Activated B cell treated with CpG ODN at 0.5 μM for 24 hours (primary cell): ENCODE measurements at regions of chr17 and their contacts with region 1.

Region 1: GRCh38 chr17:44775136-44775837 is 16.5 kb downstream of the ADAM11 start:
- DNase-seq: peak; percentile 90
- ATAC-seq: peak; percentile 96
- H3K4me3 Mint-ChIP-seq: peak overlapping the region; percentile 87
- H3K27ac Mint-ChIP-seq: no peak overlapping the region
- H3K4me1 Mint-ChIP-seq: peaks cover 18% of the 10 kb centered on the region
- H3K27me3 Mint-ChIP-seq: no peaks in the 10 kb centered on the region
- CTCF ChIP-seq: no peak

Region 2: GRCh38 chr17:44807817-44808155 is 32.5 kb after region 1 on chr17:
- CTCF ChIA-PET with region 1: no interaction called
- POLR2A ChIA-PET with region 1: interaction called, 10 read pairs
- intact Hi-C with region 1: no loop called
- DNase-seq: no peak
- ATAC-seq: no peak
- H3K4me3 Mint-ChIP-seq: no peak overlapping the region
- H3K27ac Mint-ChIP-seq: no peak overlapping the region
- H3K4me1 Mint-ChIP-seq: peaks cover 2% of the 10 kb centered on the region
- H3K27me3 Mint-ChIP-seq: no peaks in the 10 kb centered on the region
- CTCF ChIP-seq: no peak

Region 3: DNA sequence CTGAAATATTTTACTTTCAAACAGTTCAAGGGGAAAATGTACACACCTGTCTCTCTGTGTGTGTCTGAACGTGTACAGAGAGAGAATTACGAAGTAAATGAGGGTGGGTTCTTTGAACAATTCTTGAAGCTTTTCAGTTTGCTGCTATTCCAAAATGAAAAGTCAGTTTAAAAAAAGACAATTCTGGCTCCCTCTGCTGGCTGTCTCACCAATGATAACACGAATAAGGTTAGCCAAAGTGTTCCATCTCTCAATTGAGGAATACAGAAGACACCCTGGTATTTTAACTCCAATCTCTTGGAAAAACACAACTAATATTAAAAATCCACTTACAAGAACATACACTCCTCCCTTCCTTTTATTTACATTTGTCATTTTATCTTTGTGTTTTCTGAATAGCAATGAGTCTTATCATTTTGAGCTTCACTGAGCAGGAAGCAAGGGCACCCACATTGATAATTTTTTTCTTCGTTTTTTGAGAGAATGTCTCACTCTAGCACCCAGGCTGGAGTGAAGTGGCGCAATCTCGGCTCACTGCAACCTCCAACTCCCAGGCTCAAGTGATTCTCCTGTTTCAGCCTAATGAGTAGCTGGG is 103.4 kb after region 1 on chr17:
- CTCF ChIA-PET with region 1: interaction called, 28 read pairs
- POLR2A ChIA-PET with region 1: no interaction called
- intact Hi-C with region 1: loop called (anchors 1 kb)
- DNase-seq: no peak
- ATAC-seq: no peak
- H3K4me3 Mint-ChIP-seq: no peak overlapping the region
- H3K27ac Mint-ChIP-seq: no peak overlapping the region
- H3K4me1 Mint-ChIP-seq: no peaks in the 10 kb centered on the region
- H3K27me3 Mint-ChIP-seq: no peaks in the 10 kb centered on the region
- CTCF ChIP-seq: no peak

Region 4: DNA sequence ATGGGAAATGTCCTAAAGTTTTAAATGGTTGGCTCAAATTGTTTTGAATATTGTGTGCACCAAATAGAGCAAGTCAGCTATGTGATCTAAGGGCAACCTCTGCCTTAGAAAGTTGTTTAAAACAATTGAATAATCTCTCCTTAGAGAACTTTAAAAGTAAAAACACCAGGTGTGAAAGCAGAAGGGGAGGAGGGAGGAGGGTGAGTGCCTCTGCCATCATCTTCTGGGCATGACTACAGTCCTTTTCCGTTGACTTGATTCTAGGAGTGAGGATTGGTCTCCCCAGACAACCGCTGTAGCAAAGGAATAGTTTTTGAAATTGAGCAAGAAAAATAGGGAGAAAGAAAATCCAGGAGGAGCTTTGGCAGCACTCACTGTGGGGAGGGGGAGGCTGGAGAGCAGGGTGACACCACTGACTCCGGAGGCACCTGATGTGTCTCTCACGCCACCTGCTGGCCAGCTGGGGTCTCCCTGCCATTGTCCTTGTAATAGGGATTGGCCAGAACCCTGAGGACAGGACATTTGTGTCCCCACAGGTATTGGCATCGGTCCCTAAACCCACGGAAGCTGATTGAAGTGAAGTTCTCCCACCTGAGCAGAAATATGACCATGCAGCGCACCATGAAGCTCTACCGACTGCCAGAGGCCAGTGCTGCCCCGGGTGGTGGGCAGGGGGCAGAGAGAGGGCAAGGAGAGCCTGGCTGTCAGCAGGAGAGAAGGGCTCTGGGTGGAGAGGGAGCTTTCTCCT is 323.8 kb after region 1 on chr17:
- CTCF ChIA-PET with region 1: no interaction called
- POLR2A ChIA-PET with region 1: no interaction called
- intact Hi-C with region 1: loop called (anchors 1 kb)
- DNase-seq: peak; percentile 67
- ATAC-seq: peak; percentile 90
- H3K4me3 Mint-ChIP-seq: no peak overlapping the region
- H3K27ac Mint-ChIP-seq: no peak overlapping the region
- H3K4me1 Mint-ChIP-seq: peaks cover 8% of the 10 kb centered on the region
- H3K27me3 Mint-ChIP-seq: no peaks in the 10 kb centered on the region
- CTCF ChIP-seq: no peak